ENCODE measurements at regions of chr13 and their contacts with region 1.

Region 1: DNA sequence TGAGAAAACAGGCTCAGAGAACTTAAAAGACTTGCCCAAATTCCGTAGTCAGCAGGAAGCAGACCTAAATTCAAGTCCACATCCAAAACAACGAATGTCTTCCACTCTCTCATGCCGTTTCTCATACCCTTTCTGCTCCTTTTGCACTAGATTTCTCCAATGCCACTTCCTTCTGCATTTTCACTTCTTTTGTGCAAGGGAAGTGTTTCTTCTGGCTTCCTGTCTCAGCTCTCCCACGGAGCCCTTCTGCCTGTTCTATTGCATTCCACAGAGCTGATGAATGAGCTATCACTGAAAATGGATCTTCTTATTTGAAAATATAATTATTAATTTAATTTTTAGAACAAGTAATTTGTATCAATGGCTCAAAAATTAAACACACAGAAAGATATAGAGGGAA is 56.1 kb upstream of the STK24 start:
- DNase-seq: no peak
- H3K4me3 Mint-ChIP-seq: no peak overlapping the region
- H3K27ac Mint-ChIP-seq: no peak overlapping the region
- H3K4me1 Mint-ChIP-seq: no peaks in the 10 kb centered on the region
- H3K27me3 Mint-ChIP-seq: peaks cover 13% of the 10 kb centered on the region
- CTCF ChIP-seq: no peak

Region 2: GRCh38 chr13:98564204-98564603 is 68.8 kb before region 1 on chr13:
- CTCF ChIA-PET with region 1: interaction called, 10 read pairs
- POLR2A ChIA-PET with region 1: no interaction called
- intact Hi-C with region 1: no loop called
- DNase-seq: no peak
- H3K4me3 Mint-ChIP-seq: no peak overlapping the region
- H3K27ac Mint-ChIP-seq: no peak overlapping the region
- H3K4me1 Mint-ChIP-seq: peaks cover 44% of the 10 kb centered on the region
- H3K27me3 Mint-ChIP-seq: no peaks in the 10 kb centered on the region
- CTCF ChIP-seq: no peak